Right ventricle myocardium inferior (tissue), 1 donor: ENCODE measurements at regions of chr6 and their contacts with region 1.

Region 1: GRCh38 chr6:15245361-15246216 is at the start of gene JARID2:
- DNase-seq: peak; percentile 99
- ATAC-seq: peak; percentile 89
- total RNA-seq, gene JARID2: 8.4 TPM

Region 2: DNA sequence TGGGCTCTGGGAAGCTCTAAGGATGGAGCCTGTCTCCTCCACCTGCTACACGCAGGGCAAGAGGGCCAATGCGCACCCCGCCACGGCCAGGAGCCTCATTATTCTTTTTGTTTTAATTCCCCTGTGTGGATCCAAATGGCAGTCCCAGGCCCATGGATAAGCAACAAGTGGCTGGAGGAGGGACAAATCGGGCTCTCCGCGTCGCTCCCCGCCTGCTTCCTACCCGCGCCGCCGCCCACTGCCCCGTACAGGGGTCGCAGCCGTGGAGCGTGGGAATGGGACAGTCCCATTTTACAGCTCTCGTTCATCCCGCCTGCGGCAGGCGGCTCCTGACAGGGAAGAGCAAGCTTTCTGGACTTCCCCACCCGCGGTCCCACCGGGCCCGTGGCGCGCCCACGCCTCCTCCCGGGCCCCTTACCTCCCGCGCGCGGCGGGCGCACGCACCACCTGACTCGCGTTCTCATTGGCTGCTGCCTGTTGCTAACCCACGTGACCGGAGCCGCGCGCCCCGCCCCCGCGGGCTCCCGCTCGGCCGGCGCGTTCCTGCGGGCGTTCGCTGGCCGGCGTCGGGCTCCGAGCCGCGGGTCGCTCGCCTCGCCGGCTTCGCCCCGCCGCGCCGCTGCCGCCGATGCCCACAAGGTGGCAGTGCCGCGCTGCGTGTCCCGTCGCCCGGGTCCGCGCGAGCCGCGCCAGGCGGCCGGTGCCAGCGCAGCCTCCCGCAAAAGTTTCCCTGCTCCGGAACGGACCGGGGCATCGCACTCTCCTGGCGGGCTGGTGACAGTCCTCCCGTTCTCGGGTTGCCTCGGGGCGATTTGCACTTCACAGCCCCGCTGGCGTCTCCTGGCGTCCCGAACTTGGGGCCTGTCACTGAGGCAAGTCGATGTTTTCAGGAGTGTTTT is 1034.7 kb before region 1 on chr6:
- intact Hi-C with region 1: loop called (anchors 1 kb)
- DNase-seq: peak; percentile 96
- ATAC-seq: peak; percentile 96

Region 3: GRCh38 chr6:14638906-14639761 is 606.5 kb before region 1 on chr6:
- intact Hi-C with region 1: loop called (anchors 5 kb)
- DNase-seq: peak; percentile 61
- ATAC-seq: peak; percentile 88

Region 4: GRCh38 chr6:14865531-14866100 is 380.0 kb before region 1 on chr6:
- intact Hi-C with region 1: no loop called
- DNase-seq: no peak
- ATAC-seq: no peak

Region 5: DNA sequence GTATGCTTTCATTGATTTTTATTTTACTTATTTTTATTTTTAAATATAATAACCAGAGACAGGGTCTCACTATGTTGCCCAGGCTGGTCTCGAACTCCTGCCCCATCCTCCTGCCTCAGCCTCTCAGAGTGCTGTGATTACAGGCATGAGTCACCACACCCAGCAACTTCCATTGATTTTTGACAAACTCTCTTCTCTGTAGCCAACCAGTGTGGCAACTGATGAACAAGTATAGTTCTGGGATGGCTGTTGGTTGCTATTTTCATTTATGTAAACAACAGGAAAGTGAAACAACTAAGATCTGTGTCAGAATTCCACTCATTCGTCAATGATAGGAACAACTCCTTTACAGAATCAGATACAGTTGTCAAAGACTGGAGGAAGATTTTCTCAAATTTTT is 356.4 kb before region 1 on chr6:
- intact Hi-C with region 1: loop called (anchors 5 kb)
- DNase-seq: no peak
- ATAC-seq: no peak

Region 6: DNA sequence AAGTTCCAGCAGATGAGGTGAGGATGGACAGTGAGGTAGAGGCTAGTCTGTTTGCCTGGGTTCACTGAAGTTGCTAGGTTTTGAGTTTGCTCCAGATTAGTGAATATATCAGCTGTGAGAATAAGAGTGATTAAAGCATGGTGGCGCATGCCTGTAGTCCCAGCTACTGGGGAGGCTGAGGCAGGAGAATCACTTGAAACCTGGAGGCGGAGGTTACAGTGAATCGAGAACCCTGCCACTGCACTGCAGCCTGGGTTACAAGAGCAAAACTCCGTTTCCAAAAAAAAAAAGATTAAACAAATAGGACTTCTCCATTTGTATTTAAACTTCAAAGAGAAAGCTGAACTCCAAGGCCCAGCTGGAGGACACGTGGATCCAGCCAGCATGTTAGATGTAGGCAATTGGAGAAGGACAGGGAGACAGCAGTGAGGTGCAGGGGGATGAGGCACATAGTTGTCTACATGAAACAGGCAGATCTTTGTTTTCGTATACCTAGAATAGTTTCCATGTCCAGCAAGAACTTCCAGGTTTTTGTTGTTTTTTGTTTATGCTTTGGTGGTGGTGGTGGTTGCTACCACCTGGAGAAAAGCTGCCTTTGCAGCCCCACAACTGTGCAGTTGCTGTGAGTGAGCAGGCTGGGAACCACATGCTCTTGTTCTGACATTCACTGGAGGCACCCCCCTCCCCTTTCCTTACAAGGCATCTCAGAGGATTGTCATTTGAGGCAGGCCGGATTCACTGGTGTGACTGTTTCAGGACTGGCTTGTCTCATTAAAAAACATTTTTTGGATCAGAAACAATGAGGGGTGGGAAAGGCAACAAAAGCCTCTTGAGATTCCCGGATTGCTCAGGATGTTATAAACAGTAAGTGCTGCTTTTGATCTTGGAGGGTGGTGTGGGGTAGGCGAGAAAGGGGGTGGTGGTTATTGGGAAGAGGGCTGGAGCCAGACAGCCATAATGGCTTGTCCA is 72.6 kb after region 1 on chr6:
- intact Hi-C with region 1: loop called (anchors 5 kb)
- DNase-seq: no peak
- ATAC-seq: no peak

Region 7: DNA sequence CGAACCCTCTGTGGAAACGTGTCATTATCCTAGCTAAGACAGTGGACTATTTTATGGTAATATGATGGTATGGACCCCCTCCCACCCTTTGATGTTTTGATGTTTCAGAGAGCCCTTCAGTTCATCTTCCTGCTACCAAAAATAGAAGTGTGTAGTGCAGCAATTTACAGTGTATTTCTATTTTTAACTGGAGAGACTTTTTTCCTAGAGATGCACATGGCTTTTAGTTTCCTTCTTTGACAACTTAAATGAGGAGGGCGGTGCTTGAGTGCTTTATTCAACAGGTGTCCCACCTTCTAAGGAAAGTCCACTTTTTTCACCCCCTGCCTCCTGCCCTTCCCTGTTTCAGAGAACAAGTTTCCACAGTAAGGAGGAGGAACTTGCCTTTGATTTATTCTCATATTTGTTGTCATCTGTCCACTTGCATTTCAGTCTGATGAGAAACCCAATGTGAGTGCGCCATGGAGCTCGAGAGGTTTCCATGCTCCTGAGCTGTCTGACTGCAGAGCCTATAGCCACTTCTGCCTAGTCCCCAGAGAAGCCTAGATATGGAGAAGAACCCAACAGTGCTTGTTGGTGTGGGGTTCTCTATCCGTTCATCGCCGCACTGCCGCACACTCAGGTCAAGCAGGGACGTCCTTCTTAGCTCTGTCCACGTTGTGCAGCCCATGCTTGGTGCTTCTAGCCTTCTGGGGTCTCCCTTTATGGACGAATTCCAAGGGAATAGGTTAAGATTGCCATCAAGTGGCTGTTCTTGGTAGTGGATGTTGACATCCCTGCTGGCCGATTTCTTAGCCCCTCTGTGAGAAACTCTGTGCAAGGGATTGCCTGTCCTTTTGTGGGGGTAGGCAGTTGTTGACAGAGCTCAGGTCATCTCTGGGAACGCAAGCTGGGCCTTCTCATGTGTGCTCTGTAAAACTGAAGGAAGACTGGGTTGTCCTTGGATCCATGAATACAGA is 144.5 kb after region 1 on chr6:
- intact Hi-C with region 1: loop called (anchors 5 kb)
- DNase-seq: no peak
- ATAC-seq: peak; percentile 29

Region 8: DNA sequence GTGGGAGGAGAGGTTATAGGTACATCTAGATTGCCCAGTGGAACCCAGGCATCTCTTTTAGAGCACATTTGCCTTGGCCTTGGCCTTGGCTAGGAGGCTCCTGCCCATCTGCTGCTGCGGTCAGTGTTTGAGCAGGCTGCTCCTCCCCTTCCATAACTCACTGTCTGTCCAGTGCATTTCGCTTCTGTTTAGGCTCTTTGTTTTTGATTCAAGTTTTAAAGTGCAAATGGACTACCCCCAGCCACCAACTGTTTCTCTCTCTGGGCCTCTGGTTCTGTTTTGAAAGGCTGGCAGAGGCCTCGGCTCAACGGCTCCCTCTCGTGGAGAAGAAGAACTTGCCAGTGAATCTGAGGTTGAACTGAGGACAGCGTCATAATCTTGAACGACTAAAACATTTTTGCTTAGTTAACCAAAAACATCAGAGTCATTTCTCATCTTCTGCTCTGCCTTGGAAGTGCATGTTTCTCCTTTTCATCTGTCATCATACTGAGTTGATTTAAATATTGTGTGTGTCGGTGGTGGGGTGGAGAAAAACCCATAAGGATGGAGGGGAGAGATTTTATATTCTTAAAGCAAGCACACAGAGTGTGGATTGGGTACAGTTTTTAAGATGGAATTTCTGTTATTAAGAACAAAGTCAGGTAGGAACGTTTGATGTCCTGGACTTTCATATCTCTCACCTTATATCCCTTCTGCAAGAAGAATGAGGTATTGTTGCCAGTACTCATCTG is 245.8 kb after region 1 on chr6:
- intact Hi-C with region 1: loop called (anchors 5 kb)
- DNase-seq: no peak
- ATAC-seq: peak; percentile 76